ENCODE measurements at regions of chr20 and their contacts with region 1.

Region 1: GRCh38 chr20:25390538-25391528 is at the start of gene ABHD12:
- DNase-seq: peak; percentile 98
- ATAC-seq: peak; percentile 97
- H3K4me3 Mint-ChIP-seq: peak within 1 kb of the TSS; percentile 79
- H3K27ac Mint-ChIP-seq: peak within 1 kb of the TSS; percentile 84
- H3K4me1 Mint-ChIP-seq: peaks cover 12% of the 10 kb centered on the region
- H3K27me3 Mint-ChIP-seq: no peaks in the 10 kb centered on the region
- total RNA-seq, gene ABHD12: 17.4 to 18.7 TPM

Region 2: GRCh38 chr20:25076731-25077609 is 313.9 kb before region 1 on chr20:
- CTCF ChIA-PET with region 1: no interaction called
- POLR2A ChIA-PET with region 1: no interaction called
- intact Hi-C with region 1: loop called (anchors 5 to 10 kb)
- DNase-seq: peak; percentile 61
- ATAC-seq: peak; percentile 62
- H3K4me3 Mint-ChIP-seq: peak overlapping the region; percentile 32
- H3K27ac Mint-ChIP-seq: no peak overlapping the region
- H3K4me1 Mint-ChIP-seq: peaks cover 14% of the 10 kb centered on the region
- H3K27me3 Mint-ChIP-seq: peaks cover 59% of the 10 kb centered on the region

Region 3: DNA sequence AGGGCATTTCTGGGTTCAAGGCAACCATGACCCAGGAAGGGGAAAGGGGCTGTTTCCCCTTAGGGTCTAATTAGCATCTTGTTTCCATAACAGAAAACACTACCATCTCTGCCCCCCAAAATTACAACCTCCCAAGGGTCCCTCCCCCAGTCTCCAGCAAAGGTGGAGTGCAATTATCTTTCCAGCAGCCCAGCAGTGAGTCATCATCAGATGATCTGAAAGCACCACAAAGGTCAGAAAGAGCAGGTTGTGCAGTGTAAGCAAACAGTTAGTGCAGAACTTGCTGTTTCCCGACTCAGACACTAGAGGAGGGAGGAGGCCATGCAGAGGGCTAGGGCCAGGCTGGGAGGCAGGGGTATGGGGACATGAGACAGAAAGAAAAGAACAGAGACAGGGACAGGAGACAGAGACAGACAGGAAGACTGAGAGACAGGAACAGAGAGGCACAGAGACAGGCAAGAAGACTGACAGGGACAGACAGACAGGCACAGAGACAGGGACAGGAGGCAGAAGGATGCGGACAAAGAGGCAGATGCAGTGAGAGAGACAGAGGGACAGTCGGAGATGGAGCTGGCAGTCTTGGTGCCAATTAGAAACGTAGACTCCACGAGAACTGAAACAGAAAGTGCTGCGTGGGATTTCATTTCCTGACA is 80.4 kb before region 1 on chr20:
- CTCF ChIA-PET with region 1: no interaction called
- POLR2A ChIA-PET with region 1: interaction called, 3 read pairs
- intact Hi-C with region 1: loop called (anchors 1 to 2 kb)
- DNase-seq: peak; percentile 79
- ATAC-seq: peak; percentile 97
- H3K4me3 Mint-ChIP-seq: peak overlapping the region; percentile 59
- H3K27ac Mint-ChIP-seq: peak overlapping the region; percentile 94
- H3K4me1 Mint-ChIP-seq: peaks cover 35% of the 10 kb centered on the region
- H3K27me3 Mint-ChIP-seq: no peaks in the 10 kb centered on the region

Region 4: GRCh38 chr20:25486377-25486776 is 95.5 kb after region 1 on chr20:
- CTCF ChIA-PET with region 1: no interaction called
- POLR2A ChIA-PET with region 1: no interaction called
- intact Hi-C with region 1: no loop called
- DNase-seq: peak; percentile 13
- ATAC-seq: no peak
- H3K4me3 Mint-ChIP-seq: no peak overlapping the region
- H3K27ac Mint-ChIP-seq: no peak overlapping the region
- H3K4me1 Mint-ChIP-seq: peaks cover 28% of the 10 kb centered on the region
- H3K27me3 Mint-ChIP-seq: no peaks in the 10 kb centered on the region

Region 5: GRCh38 chr20:25623736-25624499 is 233.1 kb after region 1 on chr20 and contains the start of gene NANP:
- CTCF ChIA-PET with region 1: no interaction called
- POLR2A ChIA-PET with region 1: no interaction called
- intact Hi-C with region 1: loop called (anchors 1 to 5 kb)
- DNase-seq: peak; percentile 95
- ATAC-seq: peak; percentile 87
- H3K4me3 Mint-ChIP-seq: peak within 1 kb of the TSS; percentile 80
- H3K27ac Mint-ChIP-seq: peak within 1 kb of the TSS; percentile 95
- H3K4me1 Mint-ChIP-seq: peaks cover 21% of the 10 kb centered on the region
- H3K27me3 Mint-ChIP-seq: no peaks in the 10 kb centered on the region
- total RNA-seq, gene NANP: 6.1 to 8.3 TPM

Region 6: DNA sequence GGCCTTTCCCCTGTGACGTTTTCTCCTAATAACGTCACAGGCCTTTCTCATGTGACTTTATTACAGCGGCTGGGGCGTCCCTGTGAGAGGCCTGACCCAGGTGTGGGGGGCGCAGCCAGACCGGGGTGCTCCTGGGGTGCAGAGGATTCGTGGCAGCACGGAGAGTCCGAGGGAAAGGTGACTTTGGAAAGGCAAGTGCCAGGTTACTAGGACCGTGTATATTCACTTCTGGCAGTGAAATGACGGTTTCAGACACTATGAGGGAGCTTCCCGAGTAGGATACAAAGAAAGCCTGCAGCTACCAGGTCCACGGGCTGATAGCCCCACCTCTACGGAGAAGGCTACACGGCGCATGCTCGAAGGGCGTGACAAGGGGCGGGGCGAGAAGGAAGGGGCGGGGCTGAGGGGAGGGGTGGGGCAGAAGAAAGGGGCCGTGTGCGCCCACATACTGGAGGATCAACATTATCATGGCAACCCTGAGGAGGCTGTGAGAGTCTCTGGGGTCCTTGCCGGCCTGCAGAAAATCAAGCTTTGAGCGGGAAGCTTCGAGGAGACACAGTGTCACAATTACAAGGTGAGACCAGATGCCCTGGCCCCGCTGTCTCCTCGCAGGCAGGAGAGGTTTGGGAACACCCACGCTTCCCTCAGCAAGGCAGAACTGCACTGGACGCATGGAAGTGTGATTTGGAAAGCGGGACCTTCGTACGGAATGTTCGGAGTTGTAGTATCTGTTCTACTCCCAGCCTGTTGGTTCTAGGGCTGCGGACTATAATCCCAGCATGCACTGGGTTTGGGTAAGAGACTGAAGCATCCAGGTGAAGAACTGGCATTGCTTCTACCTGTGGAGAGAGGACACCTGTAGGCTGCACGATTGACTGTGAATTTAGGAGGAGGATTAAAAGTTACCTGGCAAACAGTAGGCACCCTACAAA is 360.2 kb after region 1 on chr20:
- CTCF ChIA-PET with region 1: no interaction called
- POLR2A ChIA-PET with region 1: no interaction called
- intact Hi-C with region 1: loop called in 1 of 2 experiments (anchors 1 kb)
- DNase-seq: peak; percentile 82
- ATAC-seq: peak; percentile 97
- H3K4me3 Mint-ChIP-seq: peak overlapping the region; percentile 75
- H3K27ac Mint-ChIP-seq: peak overlapping the region; percentile 80
- H3K4me1 Mint-ChIP-seq: peaks cover 18% of the 10 kb centered on the region
- H3K27me3 Mint-ChIP-seq: no peaks in the 10 kb centered on the region